Activated CD4-positive, alpha-beta T cell treated with anti-CD3 and anti-CD28 coated beads for 36 hours (primary cell): ENCODE measurements at regions of chr1 and their contacts with region 1.

Region 1: GRCh38 chr1:53326088-53326597 is 1.7 kb downstream of the LRP8 start:
- DNase-seq: peak; percentile 98
- ATAC-seq: peak; percentile 89
- H3K4me3 Mint-ChIP-seq: peak overlapping the region; percentile 92
- H3K27ac Mint-ChIP-seq: peak overlapping the region; percentile 93
- H3K4me1 Mint-ChIP-seq: peaks cover 19% of the 10 kb centered on the region
- H3K27me3 Mint-ChIP-seq: no peaks in the 10 kb centered on the region

Region 2: DNA sequence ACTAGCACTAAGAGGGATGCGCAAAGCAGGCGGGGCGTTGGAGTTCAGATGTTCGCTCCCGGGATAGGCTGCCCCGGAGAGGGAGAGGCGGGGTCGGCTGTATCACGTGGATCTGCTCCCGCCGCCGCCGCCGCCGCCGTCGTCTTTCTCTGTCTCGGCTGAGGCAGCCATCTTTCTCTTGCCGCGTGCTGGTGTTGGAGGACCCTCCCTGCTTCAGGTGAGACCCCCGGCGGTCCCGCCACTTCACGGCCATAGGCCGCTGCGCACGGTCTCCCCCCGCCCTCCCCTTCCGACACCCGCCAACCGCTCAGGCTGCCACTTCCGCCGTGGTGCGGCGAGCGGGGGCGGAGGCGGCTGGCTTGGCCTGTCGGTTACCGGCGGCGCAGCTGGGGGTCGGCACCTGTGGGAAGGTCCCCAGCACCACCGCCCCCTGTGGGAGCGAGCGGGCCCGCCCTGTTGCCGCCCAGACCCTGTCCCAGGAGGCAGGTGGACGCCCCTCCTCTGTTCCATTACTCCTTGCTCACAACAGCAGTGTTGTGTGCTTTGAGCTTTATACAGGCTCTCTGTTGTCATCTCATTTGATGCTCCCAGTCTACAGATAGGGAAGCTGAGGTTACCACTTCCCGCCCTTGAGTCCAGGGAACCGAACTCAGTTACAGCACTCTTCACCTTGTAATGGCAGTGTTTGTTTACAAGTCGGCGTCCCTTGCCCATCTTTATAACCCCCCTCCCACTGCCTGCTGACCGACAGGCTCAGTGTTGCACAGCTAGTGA is 1269.8 kb before region 1 on chr1 and contains the start of gene BTF3L4:
- CTCF ChIA-PET with region 1: no interaction called
- POLR2A ChIA-PET with region 1: no interaction called
- intact Hi-C with region 1: loop called in 1 of 2 experiments (anchors 1 kb)
- DNase-seq: peak; percentile 98
- ATAC-seq: peak; percentile 96
- H3K4me3 Mint-ChIP-seq: peak within 1 kb of the TSS; percentile 91
- H3K27ac Mint-ChIP-seq: peak within 1 kb of the TSS; percentile 99
- H3K4me1 Mint-ChIP-seq: peaks cover 40% of the 10 kb centered on the region
- H3K27me3 Mint-ChIP-seq: no peaks in the 10 kb centered on the region
- total RNA-seq, gene BTF3L4: 33.8 to 37.8 TPM

Region 3: DNA sequence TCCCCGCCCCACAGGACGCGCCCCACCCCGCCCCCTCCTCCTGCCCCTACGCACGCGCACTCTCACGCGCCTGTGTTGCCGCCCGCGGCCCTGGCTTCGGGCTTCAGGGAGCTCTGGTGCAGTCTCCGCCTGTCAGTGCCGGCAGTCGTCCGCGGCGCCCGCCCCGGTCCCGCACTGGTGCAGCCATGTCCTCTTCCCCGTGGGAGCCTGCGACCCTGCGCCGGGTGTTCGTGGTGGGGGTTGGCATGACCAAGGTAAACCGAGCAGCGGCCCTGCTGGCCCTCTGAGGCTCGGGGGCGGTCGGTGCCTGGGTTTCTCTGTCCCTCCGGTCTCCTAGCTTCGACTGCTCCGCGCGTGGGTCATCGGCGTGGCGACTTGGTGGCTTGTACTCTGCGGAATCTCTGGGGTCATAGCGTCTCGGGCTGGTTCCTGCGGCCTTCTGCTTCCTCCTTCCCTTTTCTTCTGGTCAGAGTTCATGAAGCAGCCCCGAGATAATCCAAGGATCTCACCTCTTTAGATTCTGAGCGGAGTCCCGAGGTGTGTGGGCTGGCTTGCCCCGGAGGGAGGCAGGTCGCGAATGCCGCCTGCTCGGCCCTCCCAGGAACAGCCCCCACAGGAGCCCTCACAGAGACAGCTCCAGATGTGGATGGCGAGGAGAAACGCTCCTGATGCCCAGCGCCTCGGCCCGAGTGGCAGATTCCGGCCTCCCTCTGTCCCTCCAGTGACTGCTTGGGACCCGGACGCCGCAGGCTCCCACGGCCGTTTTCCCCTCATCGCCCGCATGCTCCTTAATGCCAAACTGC is 398.7 kb before region 1 on chr1 and contains the start of gene SCP2:
- CTCF ChIA-PET with region 1: interaction called, 3 read pairs
- POLR2A ChIA-PET with region 1: no interaction called
- intact Hi-C with region 1: loop called in 1 of 2 experiments (anchors 5 kb)
- DNase-seq: peak; percentile 90
- ATAC-seq: peak; percentile 94
- H3K4me3 Mint-ChIP-seq: peak within 1 kb of the TSS; percentile 78
- H3K27ac Mint-ChIP-seq: peak within 1 kb of the TSS; percentile 68
- H3K4me1 Mint-ChIP-seq: peaks cover 14% of the 10 kb centered on the region
- H3K27me3 Mint-ChIP-seq: no peaks in the 10 kb centered on the region
- total RNA-seq, gene SCP2: 46.6 to 67.1 TPM

Region 4: GRCh38 chr1:53121319-53122172 is 204.6 kb before region 1 on chr1:
- CTCF ChIA-PET with region 1: no interaction called
- POLR2A ChIA-PET with region 1: no interaction called
- intact Hi-C with region 1: no loop called
- DNase-seq: peak; percentile 55
- ATAC-seq: peak; percentile 73
- H3K4me3 Mint-ChIP-seq: no peak overlapping the region
- H3K27ac Mint-ChIP-seq: no peak overlapping the region
- H3K4me1 Mint-ChIP-seq: peaks cover 3% of the 10 kb centered on the region
- H3K27me3 Mint-ChIP-seq: no peaks in the 10 kb centered on the region

Region 5: DNA sequence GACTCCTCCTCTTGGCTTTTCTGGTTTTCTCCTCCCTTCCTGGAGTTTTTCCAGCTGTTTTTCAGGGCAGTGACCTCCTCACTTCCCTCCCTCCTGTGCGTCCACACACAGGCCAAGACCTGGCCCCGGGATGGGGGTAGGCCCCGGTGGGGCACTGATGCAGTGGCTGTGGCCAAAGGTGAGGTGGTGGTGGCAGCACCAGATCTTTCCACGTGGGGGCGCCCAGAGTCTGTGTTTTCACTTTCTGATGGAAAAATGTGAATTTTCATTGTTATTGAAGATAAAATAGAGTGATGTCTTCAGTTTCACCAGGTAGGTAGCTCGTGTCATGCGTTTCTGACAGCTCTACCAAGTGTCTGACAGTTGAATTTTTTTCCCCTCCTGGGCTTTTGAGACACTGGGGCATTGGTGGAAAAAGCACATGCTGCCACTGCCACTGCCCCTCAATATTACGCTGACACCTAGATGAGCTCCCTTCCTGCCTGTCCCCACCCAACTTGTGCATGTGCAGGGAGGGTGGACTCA is 47.9 kb before region 1 on chr1:
- CTCF ChIA-PET with region 1: interaction called, 6 read pairs
- POLR2A ChIA-PET with region 1: no interaction called
- intact Hi-C with region 1: loop called (anchors 2 kb)
- DNase-seq: peak; percentile 80
- ATAC-seq: peak; percentile 72
- H3K4me3 Mint-ChIP-seq: no peak overlapping the region
- H3K27ac Mint-ChIP-seq: no peak overlapping the region
- H3K4me1 Mint-ChIP-seq: no peaks in the 10 kb centered on the region
- H3K27me3 Mint-ChIP-seq: no peaks in the 10 kb centered on the region

Region 6: DNA sequence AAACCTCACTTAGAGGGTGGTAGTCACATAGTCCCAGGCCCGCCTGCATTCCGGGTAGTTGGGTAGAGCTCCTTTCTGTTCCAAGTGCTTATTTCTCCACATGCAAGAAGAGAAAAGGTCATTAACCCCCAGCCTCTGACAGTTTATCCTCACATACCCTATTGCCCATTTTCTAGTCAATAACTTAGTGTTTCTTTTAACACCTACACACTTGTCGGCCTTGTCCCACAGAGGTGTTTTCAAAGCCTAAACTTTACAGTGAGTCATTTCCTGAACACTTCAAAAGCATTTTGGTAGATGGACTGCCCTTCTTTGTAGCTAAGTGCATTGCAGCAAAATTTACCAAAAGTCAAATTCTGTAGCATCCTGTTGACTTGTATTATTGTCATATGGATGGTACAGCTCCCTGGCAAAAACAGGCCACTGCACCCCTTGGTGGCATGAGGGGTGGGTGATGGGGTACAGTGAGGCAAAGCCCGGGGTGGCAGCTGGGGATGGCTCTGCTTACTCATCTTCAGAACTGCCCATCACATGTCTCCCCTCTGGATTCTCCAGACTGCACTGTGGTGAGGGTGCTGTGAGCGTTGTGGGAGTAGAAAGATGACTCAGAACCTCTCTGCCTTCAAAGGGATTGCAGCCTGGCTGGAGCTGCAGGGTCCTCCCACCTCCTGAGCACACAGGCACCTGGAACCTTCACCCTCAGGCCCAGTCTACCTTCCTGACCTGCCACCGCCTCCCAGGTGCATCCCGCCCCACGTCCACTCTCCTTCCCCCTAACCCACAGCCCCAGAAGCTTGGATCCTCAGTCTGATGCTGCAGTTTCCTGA is 87.2 kb after region 1 on chr1:
- CTCF ChIA-PET with region 1: interaction called, 3 read pairs
- POLR2A ChIA-PET with region 1: no interaction called
- intact Hi-C with region 1: loop called (anchors 1 kb)
- DNase-seq: peak; percentile 74
- ATAC-seq: peak; percentile 89
- H3K4me3 Mint-ChIP-seq: peak overlapping the region; percentile 10
- H3K27ac Mint-ChIP-seq: peak overlapping the region; percentile 88
- H3K4me1 Mint-ChIP-seq: peaks cover 48% of the 10 kb centered on the region
- H3K27me3 Mint-ChIP-seq: no peaks in the 10 kb centered on the region

Region 7: DNA sequence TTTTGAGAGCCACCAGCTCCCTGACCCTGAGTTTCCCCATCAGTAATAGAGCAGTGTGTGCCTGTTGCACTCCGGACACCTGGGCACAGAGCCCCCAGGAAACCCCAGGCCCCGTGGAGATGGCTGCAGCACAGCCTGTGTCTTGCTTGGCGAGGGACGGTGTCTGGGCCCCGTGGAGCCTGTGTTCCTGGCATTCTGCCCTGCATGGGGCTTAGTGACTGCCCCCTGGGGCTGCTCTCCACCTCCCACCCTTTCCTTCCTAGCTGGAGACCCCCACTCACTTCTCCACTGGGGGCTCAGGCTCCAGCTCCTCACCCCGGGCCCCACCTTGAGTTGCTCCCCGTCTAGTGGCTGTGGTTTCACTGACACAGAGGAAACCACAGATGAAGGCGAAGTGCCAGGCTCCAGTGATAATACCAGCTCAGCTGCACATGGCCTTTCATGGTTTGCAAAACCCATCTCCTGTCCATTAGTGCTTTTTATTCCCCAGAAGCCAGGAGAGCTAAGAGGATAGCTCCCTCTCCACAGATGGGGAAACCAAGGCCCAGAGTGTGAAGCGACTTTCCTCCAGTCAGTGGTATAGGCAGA is 172.5 kb after region 1 on chr1:
- CTCF ChIA-PET with region 1: no interaction called
- POLR2A ChIA-PET with region 1: no interaction called
- intact Hi-C with region 1: no loop called
- DNase-seq: no peak
- ATAC-seq: no peak
- H3K4me3 Mint-ChIP-seq: no peak overlapping the region
- H3K27ac Mint-ChIP-seq: no peak overlapping the region
- H3K4me1 Mint-ChIP-seq: no peaks in the 10 kb centered on the region
- H3K27me3 Mint-ChIP-seq: peaks cover 2% of the 10 kb centered on the region

Region 8: GRCh38 chr1:54052934-54053744 is 727.0 kb after region 1 on chr1 and contains the starts of genes TCEANC2 and TMEM59:
- CTCF ChIA-PET with region 1: no interaction called
- POLR2A ChIA-PET with region 1: no interaction called
- intact Hi-C with region 1: loop called in 1 of 2 experiments (anchors 1 kb)
- DNase-seq: peak; percentile 98
- ATAC-seq: peak; percentile 96
- H3K4me3 Mint-ChIP-seq: no peak within 1 kb of the TSS
- H3K27ac Mint-ChIP-seq: no peak within 1 kb of the TSS
- H3K4me1 Mint-ChIP-seq: peaks cover 33% of the 10 kb centered on the region
- H3K27me3 Mint-ChIP-seq: no peaks in the 10 kb centered on the region
- total RNA-seq, gene TCEANC2: 14.0 to 14.2 TPM
- total RNA-seq, gene TMEM59: 99.3 to 120 TPM